ENCODE measurements at regions of chr16 and their contacts with region 1.

Region 1: DNA sequence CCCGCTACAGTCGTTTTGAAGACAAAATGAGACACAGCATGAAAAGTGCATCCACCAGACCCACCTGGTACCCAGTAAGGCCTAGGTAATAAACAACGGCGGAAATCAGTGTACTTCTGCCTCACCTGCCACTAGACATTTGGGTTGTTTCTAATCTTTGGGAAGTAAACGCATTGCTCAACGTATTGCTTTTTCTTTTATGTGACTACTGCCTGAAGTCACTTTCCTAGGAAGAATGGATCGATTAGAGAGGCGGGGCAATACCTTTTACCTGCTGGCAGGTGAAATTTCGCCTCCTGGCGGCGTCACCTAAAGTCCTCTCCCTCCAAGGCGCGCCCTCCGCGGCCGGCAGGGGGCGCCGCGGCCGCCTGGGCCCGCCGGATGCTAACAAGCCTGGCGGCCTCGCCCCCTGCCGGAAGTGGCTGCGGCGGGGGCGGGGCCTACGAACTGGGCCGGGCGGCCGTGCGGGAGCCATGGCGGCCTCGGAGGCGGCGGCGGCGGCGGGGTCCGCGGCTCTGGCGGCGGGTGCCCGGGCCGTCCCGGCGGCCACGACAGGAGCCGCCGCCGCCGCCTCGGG is at the start of gene ATMIN:
- DNase-seq: peak; percentile 89
- H3K4me3 Mint-ChIP-seq: peak within 1 kb of the TSS; percentile 79
- H3K27ac Mint-ChIP-seq: no peak within 1 kb of the TSS
- H3K4me1 Mint-ChIP-seq: peaks cover 21% of the 10 kb centered on the region
- H3K27me3 Mint-ChIP-seq: no peaks in the 10 kb centered on the region
- total RNA-seq, gene ATMIN: 19.3 to 21.3 TPM

Region 2: GRCh38 chr16:80924372-80924978 is 111.0 kb before region 1 on chr16:
- CTCF ChIA-PET with region 1: interaction called, 16 read pairs
- POLR2A ChIA-PET with region 1: no interaction called
- intact Hi-C with region 1: no loop called
- DNase-seq: peak; percentile 75
- H3K4me3 Mint-ChIP-seq: no peak overlapping the region
- H3K27ac Mint-ChIP-seq: no peak overlapping the region
- H3K4me1 Mint-ChIP-seq: no peaks in the 10 kb centered on the region
- H3K27me3 Mint-ChIP-seq: peaks cover 9% of the 10 kb centered on the region

Region 3: GRCh38 chr16:81018496-81018895 is 17.0 kb before region 1 on chr16:
- CTCF ChIA-PET with region 1: interaction called, 29 read pairs
- POLR2A ChIA-PET with region 1: no interaction called
- intact Hi-C with region 1: no loop called
- DNase-seq: no peak
- H3K4me3 Mint-ChIP-seq: no peak overlapping the region
- H3K27ac Mint-ChIP-seq: no peak overlapping the region
- H3K4me1 Mint-ChIP-seq: peaks cover 8% of the 10 kb centered on the region
- H3K27me3 Mint-ChIP-seq: no peaks in the 10 kb centered on the region

Region 4: DNA sequence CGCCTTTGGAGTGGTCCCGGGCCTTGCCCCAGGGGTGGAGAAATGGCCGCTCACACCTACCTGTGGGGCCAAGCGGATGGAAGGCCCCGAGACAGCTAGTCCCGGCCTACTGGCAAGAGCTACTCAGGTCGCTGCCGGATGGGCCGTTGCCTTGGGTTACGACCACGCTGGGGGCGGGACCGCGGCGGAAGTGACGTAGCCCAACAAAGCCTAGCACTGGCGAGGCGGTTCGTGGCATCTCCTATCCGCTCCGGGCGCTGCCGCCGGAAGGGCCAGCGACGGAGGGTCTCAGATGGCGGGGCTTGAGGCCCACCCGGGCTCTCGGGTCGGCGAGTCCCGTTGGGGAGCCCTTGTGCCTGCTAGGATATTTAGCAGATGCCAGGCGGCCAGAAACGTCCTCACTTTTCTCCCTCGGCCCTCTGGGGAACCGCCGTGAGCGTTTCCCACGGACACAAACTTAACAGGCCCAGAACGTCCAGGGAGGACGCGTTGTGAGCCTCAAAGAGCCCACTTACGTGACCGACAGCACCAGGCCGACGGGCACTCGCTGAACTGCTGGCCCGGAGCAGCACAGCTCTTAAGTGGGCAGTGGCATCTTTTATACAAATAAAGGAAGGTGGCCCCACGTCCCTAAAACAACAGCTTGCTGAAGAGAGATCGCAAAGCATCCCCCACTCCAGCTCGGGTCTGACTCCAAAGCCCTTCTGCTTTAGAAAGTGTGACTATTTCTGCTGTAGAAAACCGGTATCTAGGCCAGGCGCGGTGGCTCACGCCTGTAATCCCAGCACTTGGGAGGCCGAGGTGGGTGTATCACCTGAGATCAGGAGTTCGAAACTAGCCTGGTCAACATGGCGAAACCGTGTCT is 41.8 kb after region 1 on chr16 and contains the start of gene C16orf46:
- CTCF ChIA-PET with region 1: interaction called, 68 read pairs
- POLR2A ChIA-PET with region 1: interaction called, 11 read pairs
- intact Hi-C with region 1: loop called (anchors 1 kb)
- DNase-seq: peak; percentile 99
- H3K4me3 Mint-ChIP-seq: peak within 1 kb of the TSS; percentile 32
- H3K27ac Mint-ChIP-seq: no peak within 1 kb of the TSS
- H3K4me1 Mint-ChIP-seq: peaks cover 3% of the 10 kb centered on the region
- H3K27me3 Mint-ChIP-seq: no peaks in the 10 kb centered on the region
- total RNA-seq, gene C16orf46: 0.44 to 0.86 TPM

Region 5: DNA sequence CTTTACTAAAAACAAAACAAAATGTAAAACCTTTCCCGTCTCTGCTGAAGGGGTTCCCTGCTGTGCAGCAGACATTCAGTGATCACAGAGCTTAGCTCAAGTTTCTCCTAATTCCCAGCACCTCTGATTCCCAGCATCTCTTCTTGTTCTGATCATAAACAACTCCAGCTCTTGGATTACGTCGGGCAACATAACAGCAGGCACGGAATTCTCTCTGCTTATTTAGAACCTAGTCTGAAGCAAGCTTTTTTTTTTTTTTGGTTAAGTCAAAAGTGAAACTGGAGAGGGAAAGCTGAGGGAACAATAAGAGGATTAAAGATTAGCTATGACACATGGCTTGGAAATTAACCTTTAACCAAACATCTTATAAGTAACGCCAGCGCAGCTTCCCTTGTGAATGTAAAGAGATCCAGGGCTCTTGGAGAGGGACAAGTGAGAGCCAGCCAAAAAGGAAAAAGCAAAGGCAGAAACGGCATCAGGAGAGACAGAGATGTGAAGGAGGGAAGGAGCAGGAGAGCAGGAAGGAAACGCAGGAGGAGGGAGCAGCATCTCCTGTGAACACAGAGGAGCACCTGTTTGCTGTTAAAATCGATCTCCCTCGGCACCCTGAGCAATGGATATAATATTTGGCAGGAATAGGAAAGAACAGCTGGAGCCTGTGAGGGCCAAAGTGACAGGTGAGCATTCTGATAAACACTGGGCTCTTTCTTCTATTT is 203.0 kb after region 1 on chr16 and contains the start of gene BCO1:
- CTCF ChIA-PET with region 1: no interaction called
- POLR2A ChIA-PET with region 1: no interaction called
- intact Hi-C with region 1: no loop called
- DNase-seq: no peak
- H3K4me3 Mint-ChIP-seq: no peak within 1 kb of the TSS
- H3K27ac Mint-ChIP-seq: no peak within 1 kb of the TSS
- H3K4me1 Mint-ChIP-seq: peaks cover 5% of the 10 kb centered on the region
- H3K27me3 Mint-ChIP-seq: no peaks in the 10 kb centered on the region
- total RNA-seq, gene BCO1: not detected

Region 6: GRCh38 chr16:81737885-81738786 is 702.6 kb after region 1 on chr16:
- CTCF ChIA-PET with region 1: interaction called, 10 read pairs
- POLR2A ChIA-PET with region 1: interaction called, 3 read pairs
- intact Hi-C with region 1: loop called (anchors 2 kb)
- DNase-seq: peak; percentile 93
- H3K4me3 Mint-ChIP-seq: peak overlapping the region; percentile 53
- H3K27ac Mint-ChIP-seq: peak overlapping the region; percentile 7
- H3K4me1 Mint-ChIP-seq: peaks cover 8% of the 10 kb centered on the region
- H3K27me3 Mint-ChIP-seq: no peaks in the 10 kb centered on the region

Region 7: DNA sequence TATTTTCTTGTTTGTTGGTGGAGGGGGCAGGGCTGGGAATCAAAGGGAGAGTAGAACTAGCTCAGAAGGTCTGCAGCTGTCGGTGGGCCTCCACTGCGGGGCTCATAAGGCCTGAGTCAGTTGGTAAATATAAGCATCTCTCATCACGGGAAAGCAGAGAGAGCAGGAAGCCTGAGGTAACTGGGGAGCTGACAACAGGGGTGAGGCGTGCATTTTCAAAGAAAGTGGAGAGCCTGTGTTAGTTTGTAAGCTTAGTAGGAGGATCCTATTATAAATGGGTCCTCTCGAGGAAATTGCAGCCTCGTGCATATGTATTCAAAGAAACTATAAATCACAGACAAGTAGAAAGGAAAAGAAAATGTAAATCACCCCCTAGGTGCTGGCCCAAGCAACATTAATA is 1370.2 kb after region 1 on chr16:
- CTCF ChIA-PET with region 1: no interaction called
- POLR2A ChIA-PET with region 1: no interaction called
- intact Hi-C with region 1: no loop called
- DNase-seq: no peak
- H3K4me3 Mint-ChIP-seq: no peak overlapping the region
- H3K27ac Mint-ChIP-seq: no peak overlapping the region
- H3K4me1 Mint-ChIP-seq: no peaks in the 10 kb centered on the region
- H3K27me3 Mint-ChIP-seq: peaks cover 17% of the 10 kb centered on the region